Posterior vena cava (tissue), 2 donors: ENCODE measurements at regions of chr4 and their contacts with region 1.

Region 1: DNA sequence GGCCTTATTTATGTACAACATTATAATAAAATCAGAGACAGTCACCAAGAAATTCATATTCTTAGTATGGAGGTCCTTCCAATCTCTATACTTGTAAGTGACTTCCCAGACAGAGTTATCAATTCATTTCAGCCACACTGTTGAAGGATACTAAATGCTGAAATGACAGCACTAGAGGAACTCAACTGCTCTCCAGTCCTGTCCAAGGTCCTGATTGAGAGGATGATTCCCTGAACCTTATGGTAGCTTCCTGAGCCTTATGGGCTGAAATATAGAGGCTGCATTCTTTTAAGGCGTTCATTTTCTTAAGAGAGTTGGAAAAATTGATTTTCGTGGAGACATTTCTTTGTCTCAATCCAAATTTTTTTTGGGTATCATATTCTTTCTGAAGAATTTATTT is 205.9 kb downstream of the TLL1 start:
- DNase-seq: no peak

Region 2: DNA sequence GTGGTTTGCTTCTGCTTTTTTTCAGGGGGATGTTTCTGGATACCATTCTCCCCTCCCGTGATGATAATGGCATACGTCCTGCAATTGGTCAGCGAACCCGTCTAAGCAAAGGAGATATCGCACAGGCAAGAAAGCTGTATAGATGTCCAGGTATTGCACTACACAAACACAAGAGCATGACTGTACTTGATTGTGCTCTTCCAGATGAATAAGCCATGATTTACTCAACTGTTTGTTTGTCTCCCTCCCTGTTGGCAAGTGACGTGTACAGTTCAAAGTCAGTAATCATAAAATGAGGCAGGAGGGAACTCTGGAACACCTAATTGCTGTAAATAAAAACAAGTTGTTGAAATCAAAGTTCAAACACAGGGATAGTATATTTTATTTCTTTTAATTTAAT is 64.5 kb before region 1 on chr4:
- intact Hi-C with region 1: loop called in 1 of 2 experiments (anchors 2 kb)
- DNase-seq: no peak

Region 3: GRCh38 chr4:166049036-166049435 is 29.9 kb before region 1 on chr4:
- intact Hi-C with region 1: no loop called
- DNase-seq: no peak

Region 4: DNA sequence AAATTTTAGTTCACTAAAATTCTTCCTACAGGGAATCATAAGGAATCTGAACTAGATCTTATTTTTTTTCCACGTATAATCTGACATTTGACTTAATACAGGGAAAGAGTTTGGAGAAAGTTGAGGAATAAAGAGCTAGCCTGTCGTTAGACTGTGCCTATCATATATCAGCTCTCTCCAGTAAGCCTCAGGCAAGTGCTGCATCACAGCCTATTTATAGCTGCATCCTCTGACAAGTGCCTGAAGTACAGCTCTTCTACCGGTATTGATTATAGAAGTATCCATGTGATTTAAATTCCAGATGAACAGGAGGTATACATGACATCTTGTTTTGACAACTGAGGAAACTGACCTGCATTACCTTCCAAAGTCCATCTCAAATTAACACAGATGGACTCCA is 42.9 kb after region 1 on chr4:
- intact Hi-C with region 1: no loop called
- DNase-seq: no peak

Region 5: DNA sequence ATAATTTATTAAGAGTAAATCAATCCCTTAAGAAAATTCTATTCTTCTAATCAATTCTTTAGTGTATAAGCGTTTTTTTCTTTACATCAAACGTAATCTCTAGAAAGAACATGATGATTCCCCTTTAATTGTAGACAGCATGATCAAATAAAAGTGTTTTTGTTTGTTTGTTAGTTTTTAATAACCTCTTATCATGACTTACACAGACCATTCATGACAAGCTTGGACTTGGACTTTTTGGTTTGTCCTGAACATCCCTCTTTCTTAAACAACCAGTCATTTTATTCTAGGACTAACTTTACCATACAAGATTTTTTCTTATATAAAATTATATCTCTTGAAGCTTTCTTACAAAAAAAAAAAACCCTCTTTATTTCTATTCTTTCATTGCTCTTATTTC is 1500.0 kb after region 1 on chr4:
- intact Hi-C with region 1: no loop called
- DNase-seq: no peak